K562 (cell line): ENCODE measurements at regions of chr1 and their contacts with region 1.

Region 1: DNA sequence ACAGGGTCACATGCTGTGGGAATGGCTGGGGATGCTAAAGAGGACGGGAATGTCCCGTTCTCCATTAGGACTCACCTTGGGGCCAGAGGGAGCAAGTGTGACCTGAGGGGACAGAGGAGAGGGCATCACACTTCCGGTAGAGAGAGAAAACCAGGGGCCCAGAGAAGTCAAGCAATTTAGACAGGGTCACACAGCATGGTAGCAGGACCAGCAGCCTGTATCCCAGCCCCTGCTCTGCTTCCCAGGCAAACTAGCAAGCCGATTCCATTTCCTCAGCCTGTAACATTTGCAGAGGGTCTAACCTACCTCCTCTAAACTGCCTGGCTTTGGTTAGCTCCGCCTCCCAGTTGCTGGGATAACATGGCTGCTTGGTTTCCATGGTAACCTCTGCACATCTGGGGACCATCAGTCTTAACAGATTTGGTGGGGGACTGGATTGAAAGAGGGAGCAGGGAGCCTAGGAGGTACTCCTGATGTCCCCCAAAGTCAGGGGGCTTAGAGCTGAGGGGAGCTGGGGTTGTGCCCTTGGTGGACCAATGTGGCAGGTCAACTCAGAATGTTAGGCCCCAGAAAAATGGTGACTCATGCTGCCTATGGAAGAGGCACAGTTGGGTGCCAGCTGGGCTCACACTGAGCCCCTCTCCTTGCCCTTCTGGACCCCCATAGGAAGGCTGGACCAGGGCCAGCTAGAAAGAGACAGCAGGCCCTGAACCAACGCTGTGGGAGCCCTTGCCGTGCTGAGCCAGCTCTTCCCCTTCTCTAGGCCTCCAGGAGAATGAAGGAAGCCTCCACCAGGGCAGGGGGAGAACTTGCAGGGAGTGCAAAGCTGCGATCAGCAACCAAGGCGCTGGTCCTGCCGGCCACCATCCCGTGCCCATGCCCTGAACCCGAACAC is 9.5 kb downstream of the COL16A1 start:
- DNase-seq: no peak
- ATAC-seq: peak; percentile 24; the same call in 1 of the 3 replicates
- H3K4me3 ChIP-seq: no peak overlapping the region
- H3K27ac ChIP-seq: no peak overlapping the region; the same call in 2 of the 3 replicates
- H3K4me1 ChIP-seq: peaks cover 0 to 10% of the 10 kb centered on the region in 2 experiments; a peak in 3 of 5 replicates
- H3K27me3 ChIP-seq: peaks cover 0 to 51% of the 10 kb centered on the region in 2 experiments; a peak in 4 of 5 replicates
- CTCF ChIP-seq: no peak
- EP300 ChIP-seq: no peak
- POLR2A ChIP-seq: no peak
- RAD21 ChIP-seq: no peak

Region 2: GRCh38 chr1:31614414-31615020 is 79.8 kb before region 1 on chr1:
- CTCF ChIA-PET with region 1: no interaction called
- POLR2A ChIA-PET with region 1: no interaction called
- in situ Hi-C with region 1: no loop called
- intact Hi-C with region 1: no loop called
- DNase-seq: no peak
- ATAC-seq: no peak
- H3K4me3 ChIP-seq: no peak overlapping the region
- H3K27ac ChIP-seq: no peak overlapping the region
- H3K4me1 ChIP-seq: peaks cover 0 to 16% of the 10 kb centered on the region in 2 experiments; a peak in 2 of 5 replicates
- H3K27me3 ChIP-seq: peaks cover 30 to 73% of the 10 kb centered on the region in 2 experiments
- CTCF ChIP-seq: no peak
- EP300 ChIP-seq: no peak
- POLR2A ChIP-seq: no peak
- RAD21 ChIP-seq: no peak

Region 3: DNA sequence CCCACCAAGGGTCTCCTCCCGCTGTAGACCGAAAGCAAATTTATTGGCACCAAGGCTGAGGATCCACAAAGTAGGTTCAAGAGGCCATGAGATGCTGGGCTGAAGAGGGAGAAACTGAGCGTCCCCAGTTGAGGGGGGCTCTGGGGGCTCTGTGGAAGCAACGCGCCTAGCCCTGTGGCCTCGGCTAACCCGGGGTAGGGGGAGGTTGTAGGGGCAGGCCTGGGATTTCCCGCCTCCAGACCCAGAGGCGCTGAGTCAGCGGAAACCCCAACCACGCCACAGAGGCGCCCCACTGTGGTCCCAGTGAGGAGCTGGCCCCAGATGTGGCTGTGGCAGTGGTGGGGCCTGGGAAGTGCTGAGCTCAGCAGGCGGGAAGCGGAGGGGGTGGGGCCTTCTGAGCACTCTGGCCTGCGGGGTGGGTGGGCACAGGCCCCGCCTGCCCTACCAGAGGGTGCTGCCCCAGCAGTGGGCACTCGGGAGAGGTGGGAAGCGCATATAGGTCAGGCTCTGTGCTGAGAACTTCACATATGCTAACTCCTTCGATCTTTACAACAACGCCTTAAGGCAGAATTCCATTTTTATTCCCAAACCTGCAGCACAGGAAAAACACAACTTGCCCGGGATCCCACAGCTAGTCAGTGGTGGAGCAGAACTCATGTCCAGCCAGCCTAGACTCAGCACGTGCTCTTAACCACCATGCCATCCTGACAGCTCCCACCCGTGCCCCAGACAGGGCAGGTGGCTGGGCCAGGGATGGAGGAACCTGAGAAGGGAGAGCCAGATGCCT is 11.0 kb after region 1 on chr1:
- CTCF ChIA-PET with region 1: no interaction called
- POLR2A ChIA-PET with region 1: interaction called, 13 read pairs
- in situ Hi-C with region 1: no loop called
- intact Hi-C with region 1: no loop called
- DNase-seq: peak; percentile 88 to 94 (median 93)
- ATAC-seq: peak; percentile 95
- H3K4me3 ChIP-seq: no peak overlapping the region
- H3K27ac ChIP-seq: peak overlapping the region; percentile 29; the same call in 2 of the 3 replicates
- H3K4me1 ChIP-seq: peaks cover 14 to 27% of the 10 kb centered on the region in 2 experiments
- H3K27me3 ChIP-seq: peaks cover 16 to 56% of the 10 kb centered on the region in 2 experiments
- CTCF ChIP-seq: peak; percentile 61 to 85 (median 75)
- EP300 ChIP-seq: peak; percentile 35; the same call in 1 of the 2 replicates
- POLR2A ChIP-seq: no peak
- RAD21 ChIP-seq: peak; percentile 45 to 89

Region 4: DNA sequence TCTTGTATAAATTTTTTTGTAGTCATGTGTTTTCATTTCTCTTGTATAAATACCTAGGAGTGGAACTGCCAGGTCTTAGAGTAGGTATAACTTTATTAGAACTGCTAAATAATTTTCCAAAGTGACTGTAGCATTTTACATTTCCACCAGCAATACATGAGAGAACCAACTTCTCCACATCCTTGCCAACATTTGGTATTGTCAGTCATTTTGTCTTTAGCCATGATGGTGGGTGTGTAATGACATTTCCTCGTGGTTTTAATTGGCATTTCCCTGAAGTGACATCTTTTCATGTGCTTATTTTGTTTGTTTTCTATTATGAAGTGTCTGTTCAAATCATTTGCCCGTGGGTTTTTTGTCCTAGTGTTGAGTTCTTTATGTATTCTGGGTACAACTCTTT is 874.6 kb after region 1 on chr1:
- CTCF ChIA-PET with region 1: no interaction called
- POLR2A ChIA-PET with region 1: no interaction called
- in situ Hi-C with region 1: no loop called
- intact Hi-C with region 1: no loop called
- DNase-seq: no peak
- ATAC-seq: no peak
- H3K4me3 ChIP-seq: no peak overlapping the region
- H3K27ac ChIP-seq: no peak overlapping the region
- H3K4me1 ChIP-seq: no peaks in the 10 kb centered on the region
- H3K27me3 ChIP-seq: peaks cover 12% of the 10 kb centered on the region in 2 experiments; a peak in 4 of 5 replicates
- CTCF ChIP-seq: no peak
- EP300 ChIP-seq: no peak
- POLR2A ChIP-seq: no peak
- RAD21 ChIP-seq: no peak